AG04449 (cell line): ENCODE measurements at regions of chr11 and their contacts with region 1.

Region 1: DNA sequence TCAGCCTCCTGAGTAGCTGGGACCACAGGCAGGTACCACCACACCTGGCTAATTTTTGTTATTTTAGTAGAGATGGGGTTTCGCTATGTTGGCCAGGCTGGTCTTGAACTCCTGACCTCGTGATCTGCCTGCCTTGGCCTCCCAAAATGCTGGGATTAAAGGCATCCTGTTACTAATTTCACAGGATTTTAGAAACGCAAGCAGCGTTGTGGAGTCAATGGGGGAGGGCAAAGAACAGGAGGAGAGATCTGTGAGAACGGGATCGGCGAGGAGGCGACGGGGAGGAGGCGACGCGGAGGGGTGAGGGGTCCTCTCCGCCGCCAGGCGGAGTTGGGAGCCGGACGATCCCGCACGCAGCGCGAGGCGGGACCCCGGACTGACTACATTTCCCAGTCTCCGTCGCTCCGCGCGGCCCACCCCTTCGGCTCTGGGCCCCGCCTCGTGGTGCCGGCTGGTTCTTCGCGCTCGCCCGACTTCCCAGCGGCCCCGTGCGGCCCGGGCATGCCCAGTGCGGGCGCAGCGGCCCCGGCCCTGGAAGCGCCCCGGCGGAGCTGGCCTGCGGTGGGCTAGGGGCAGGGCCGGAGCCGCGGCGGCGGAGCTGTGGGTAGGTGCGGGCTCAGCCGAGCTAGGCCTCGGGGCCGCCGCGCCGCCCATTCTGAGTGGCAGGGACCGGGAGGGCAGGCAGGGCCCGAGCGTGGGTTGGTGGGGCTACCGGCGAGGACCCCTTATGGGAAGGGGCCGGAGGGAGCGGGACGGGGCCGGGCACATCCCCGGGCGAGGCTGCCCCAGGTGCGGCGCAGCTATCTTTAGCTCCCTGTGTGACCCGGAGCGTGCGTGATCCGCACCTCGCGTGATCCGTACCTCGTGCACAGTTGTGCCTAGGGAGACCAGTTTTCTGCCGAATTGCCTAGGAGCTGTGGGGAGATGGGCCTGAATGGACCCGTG is at the start of gene EI24:
- DNase-seq: peak; percentile 41
- H3K4me3 ChIP-seq: peak within 1 kb of the TSS; percentile 95
- CTCF ChIP-seq: peak; percentile 85

Region 2: GRCh38 chr11:125443767-125444311 is 125.4 kb before region 1 on chr11:
- CTCF ChIA-PET with region 1: no interaction called
- POLR2A ChIA-PET with region 1: no interaction called
- DNase-seq: no peak
- H3K4me3 ChIP-seq: no peak overlapping the region
- CTCF ChIP-seq: no peak

Region 3: GRCh38 chr11:125592305-125593112 is 23.3 kb after region 1 on chr11 and contains the start of gene STT3A:
- CTCF ChIA-PET with region 1: interaction called, 8 read pairs
- POLR2A ChIA-PET with region 1: interaction called, 15 read pairs
- DNase-seq: peak; percentile 100
- H3K4me3 ChIP-seq: peak within 1 kb of the TSS; percentile 99
- CTCF ChIP-seq: no peak